CD8-positive, alpha-beta T cell (primary cell): ENCODE measurements at regions of chr2 and their contacts with region 1.

Region 1: GRCh38 chr2:25376750-25377621 is 35.3 kb upstream of the DNMT3A start:
- DNase-seq: peak; percentile 83 to 98 (median 92)
- ATAC-seq: peak; percentile 97
- H3K4me3 ChIP-seq: peak overlapping the region; percentile 11 to 36
- H3K4me3 Mint-ChIP-seq: peak overlapping the region; percentile 72
- H3K27ac ChIP-seq: peak overlapping the region; percentile 36 to 69
- H3K27ac Mint-ChIP-seq: peak overlapping the region; percentile 95
- H3K4me1 ChIP-seq: peaks cover 33% of the 10 kb centered on the region
- H3K4me1 Mint-ChIP-seq: peaks cover 35% of the 10 kb centered on the region
- H3K27me3 ChIP-seq: no peaks in the 10 kb centered on the region
- H3K27me3 Mint-ChIP-seq: no peaks in the 10 kb centered on the region
- CTCF ChIP-seq: peak; percentile 98

Region 2: GRCh38 chr2:25236736-25237135 is 140.2 kb before region 1 on chr2:
- CTCF ChIA-PET with region 1: no interaction called
- POLR2A ChIA-PET with region 1: no interaction called
- intact Hi-C with region 1: no loop called
- DNase-seq: no peak
- ATAC-seq: no peak
- H3K4me3 ChIP-seq: no peak overlapping the region
- H3K4me3 Mint-ChIP-seq: no peak overlapping the region
- H3K27ac ChIP-seq: no peak overlapping the region
- H3K27ac Mint-ChIP-seq: peak overlapping the region; percentile 33
- H3K4me1 ChIP-seq: no peaks in the 10 kb centered on the region
- H3K4me1 Mint-ChIP-seq: peaks cover 2% of the 10 kb centered on the region
- H3K27me3 ChIP-seq: no peaks in the 10 kb centered on the region
- H3K27me3 Mint-ChIP-seq: no peaks in the 10 kb centered on the region
- CTCF ChIP-seq: no peak

Region 3: GRCh38 chr2:25252281-25253105 is 124.5 kb before region 1 on chr2:
- CTCF ChIA-PET with region 1: no interaction called
- POLR2A ChIA-PET with region 1: no interaction called
- intact Hi-C with region 1: loop called in 1 of 2 experiments (anchors 1 kb)
- DNase-seq: peak in 8 of 9 experiments; percentile 39 to 76 (median 65)
- ATAC-seq: peak; percentile 52
- H3K4me3 ChIP-seq: peak overlapping the region; percentile 43 to 59
- H3K4me3 Mint-ChIP-seq: peak overlapping the region; percentile 82
- H3K27ac ChIP-seq: peak overlapping the region in 1 of 2 experiments; percentile 31
- H3K27ac Mint-ChIP-seq: peak overlapping the region; percentile 89
- H3K4me1 ChIP-seq: peaks cover 30% of the 10 kb centered on the region
- H3K4me1 Mint-ChIP-seq: peaks cover 35% of the 10 kb centered on the region
- H3K27me3 ChIP-seq: no peaks in the 10 kb centered on the region
- H3K27me3 Mint-ChIP-seq: no peaks in the 10 kb centered on the region
- CTCF ChIP-seq: no peak

Region 4: GRCh38 chr2:25309402-25309801 is 67.6 kb before region 1 on chr2:
- CTCF ChIA-PET with region 1: interaction called, 10 read pairs
- POLR2A ChIA-PET with region 1: interaction called, 4 read pairs
- intact Hi-C with region 1: loop called (anchors 1 kb)
- DNase-seq: peak; percentile 40 to 80 (median 75)
- ATAC-seq: peak; percentile 39
- H3K4me3 ChIP-seq: no peak overlapping the region
- H3K4me3 Mint-ChIP-seq: peak overlapping the region; percentile 11
- H3K27ac ChIP-seq: no peak overlapping the region
- H3K27ac Mint-ChIP-seq: peak overlapping the region; percentile 79
- H3K4me1 ChIP-seq: peaks cover 90% of the 10 kb centered on the region
- H3K4me1 Mint-ChIP-seq: peaks cover 85% of the 10 kb centered on the region
- H3K27me3 ChIP-seq: no peaks in the 10 kb centered on the region
- H3K27me3 Mint-ChIP-seq: no peaks in the 10 kb centered on the region
- CTCF ChIP-seq: peak; percentile 51

Region 5: GRCh38 chr2:25342372-25343186 is 34.4 kb before region 1 on chr2:
- CTCF ChIA-PET with region 1: interaction called, 17 read pairs
- POLR2A ChIA-PET with region 1: interaction called, 10 read pairs
- intact Hi-C with region 1: loop called (anchors 1 kb)
- DNase-seq: peak; percentile 62 to 91 (median 80)
- ATAC-seq: peak; percentile 85
- H3K4me3 ChIP-seq: peak overlapping the region; percentile 22 to 53
- H3K4me3 Mint-ChIP-seq: peak overlapping the region; percentile 85
- H3K27ac ChIP-seq: no peak overlapping the region
- H3K27ac Mint-ChIP-seq: peak overlapping the region; percentile 77
- H3K4me1 ChIP-seq: peaks cover 42% of the 10 kb centered on the region
- H3K4me1 Mint-ChIP-seq: peaks cover 33% of the 10 kb centered on the region
- H3K27me3 ChIP-seq: no peaks in the 10 kb centered on the region
- H3K27me3 Mint-ChIP-seq: no peaks in the 10 kb centered on the region
- CTCF ChIP-seq: peak; percentile 87

Region 6: DNA sequence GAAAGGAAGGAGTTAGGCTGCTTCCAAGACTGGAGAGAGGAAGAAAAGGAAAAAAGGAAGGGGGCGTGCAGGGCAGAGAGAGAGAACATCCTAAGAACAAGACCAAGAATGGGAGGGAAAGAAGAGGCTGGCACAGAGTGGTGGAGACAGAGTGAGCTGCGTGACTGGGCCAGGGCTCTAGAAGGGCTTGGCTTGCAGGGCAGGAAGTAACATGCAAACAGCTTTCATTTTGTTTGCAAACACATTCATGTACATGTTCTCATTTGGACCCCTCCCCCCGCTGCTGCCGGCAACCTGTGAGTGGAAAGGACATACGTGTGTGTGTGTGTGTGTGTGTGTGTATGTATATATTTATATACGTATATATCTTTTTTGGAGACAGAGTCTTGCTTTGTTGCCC is 11.5 kb after region 1 on chr2:
- CTCF ChIA-PET with region 1: interaction called, 32 read pairs
- POLR2A ChIA-PET with region 1: no interaction called
- intact Hi-C with region 1: no loop called
- DNase-seq: no peak
- ATAC-seq: no peak
- H3K4me3 ChIP-seq: no peak overlapping the region
- H3K4me3 Mint-ChIP-seq: no peak overlapping the region
- H3K27ac ChIP-seq: no peak overlapping the region
- H3K27ac Mint-ChIP-seq: no peak overlapping the region
- H3K4me1 ChIP-seq: no peaks in the 10 kb centered on the region
- H3K4me1 Mint-ChIP-seq: no peaks in the 10 kb centered on the region
- H3K27me3 ChIP-seq: no peaks in the 10 kb centered on the region
- H3K27me3 Mint-ChIP-seq: no peaks in the 10 kb centered on the region
- CTCF ChIP-seq: no peak

Region 7: GRCh38 chr2:26269571-26270158 is 892.7 kb after region 1 on chr2:
- CTCF ChIA-PET with region 1: no interaction called
- POLR2A ChIA-PET with region 1: no interaction called
- intact Hi-C with region 1: no loop called
- DNase-seq: no peak
- ATAC-seq: no peak
- H3K4me3 ChIP-seq: no peak overlapping the region
- H3K4me3 Mint-ChIP-seq: no peak overlapping the region
- H3K27ac ChIP-seq: no peak overlapping the region
- H3K27ac Mint-ChIP-seq: no peak overlapping the region
- H3K4me1 ChIP-seq: no peaks in the 10 kb centered on the region
- H3K4me1 Mint-ChIP-seq: no peaks in the 10 kb centered on the region
- H3K27me3 ChIP-seq: no peaks in the 10 kb centered on the region
- H3K27me3 Mint-ChIP-seq: no peaks in the 10 kb centered on the region
- CTCF ChIP-seq: no peak